ENCODE measurements at regions of chr3 and their contacts with region 1.

Region 1: GRCh38 chr3:125916376-125916978 is 52.5 kb upstream of the ROPN1B start:
- DNase-seq: peak; percentile 95
- H3K4me3 ChIP-seq: peak overlapping the region; percentile 86 to 89 (median 87)
- H3K27ac ChIP-seq: peak overlapping the region; percentile 96
- H3K4me1 ChIP-seq: no peaks in the 10 kb centered on the region
- H3K27me3 ChIP-seq: no peaks in the 10 kb centered on the region
- CTCF ChIP-seq: peak in 1 of 2 donors; percentile 45

Region 2: DNA sequence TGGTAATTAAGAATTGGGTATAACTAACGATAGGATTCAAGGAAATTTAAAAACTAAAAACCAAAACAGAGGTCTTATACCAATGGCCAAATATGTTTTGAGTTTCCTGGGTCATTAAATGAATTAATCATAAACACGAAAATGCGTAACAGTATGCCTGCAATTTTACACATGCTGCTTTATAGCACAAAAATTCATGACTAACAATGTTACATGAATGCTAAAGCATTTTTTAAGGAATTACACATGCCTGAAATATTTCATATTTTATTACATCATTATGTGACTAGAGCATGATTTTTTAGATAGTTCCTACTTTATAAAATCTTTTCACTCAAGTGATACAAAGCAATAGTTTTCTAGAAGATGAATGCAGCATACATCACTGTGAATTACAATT is 616.1 kb before region 1 on chr3:
- CTCF ChIA-PET with region 1: no interaction called
- dilution Hi-C with region 1: no loop called
- in situ Hi-C with region 1: no loop called
- intact Hi-C with region 1: no loop called
- DNase-seq: peak; percentile 56
- H3K4me3 ChIP-seq: no peak overlapping the region
- H3K27ac ChIP-seq: peak overlapping the region; percentile 54
- H3K4me1 ChIP-seq: peaks cover 8% of the 10 kb centered on the region
- H3K27me3 ChIP-seq: no peaks in the 10 kb centered on the region
- CTCF ChIP-seq: no peak

Region 3: DNA sequence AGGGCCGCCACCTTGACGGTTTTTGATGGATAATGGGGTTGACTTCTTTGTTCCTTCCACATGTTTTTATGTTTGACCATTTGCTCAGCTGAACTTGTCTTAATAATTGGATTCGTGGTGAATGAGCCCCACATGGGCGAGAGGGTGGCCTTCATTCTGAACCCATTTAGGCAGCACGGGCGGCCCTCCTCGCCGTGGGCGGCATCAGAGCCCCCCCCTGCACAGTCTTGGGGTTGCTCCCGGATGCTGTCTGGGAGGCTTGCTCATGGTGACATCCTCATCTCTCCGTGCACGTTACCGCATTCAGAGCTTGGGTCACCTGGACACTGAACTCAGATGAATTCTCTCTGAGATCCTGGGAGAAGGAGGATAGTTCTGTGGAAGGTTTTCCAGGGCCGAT is 148.8 kb before region 1 on chr3:
- CTCF ChIA-PET with region 1: no interaction called
- dilution Hi-C with region 1: no loop called
- in situ Hi-C with region 1: no loop called
- intact Hi-C with region 1: loop called (anchors 2 kb)
- DNase-seq: no peak
- H3K4me3 ChIP-seq: no peak overlapping the region
- H3K27ac ChIP-seq: no peak overlapping the region
- H3K4me1 ChIP-seq: no peaks in the 10 kb centered on the region
- H3K27me3 ChIP-seq: peaks cover 5% of the 10 kb centered on the region
- CTCF ChIP-seq: no peak

Region 4: DNA sequence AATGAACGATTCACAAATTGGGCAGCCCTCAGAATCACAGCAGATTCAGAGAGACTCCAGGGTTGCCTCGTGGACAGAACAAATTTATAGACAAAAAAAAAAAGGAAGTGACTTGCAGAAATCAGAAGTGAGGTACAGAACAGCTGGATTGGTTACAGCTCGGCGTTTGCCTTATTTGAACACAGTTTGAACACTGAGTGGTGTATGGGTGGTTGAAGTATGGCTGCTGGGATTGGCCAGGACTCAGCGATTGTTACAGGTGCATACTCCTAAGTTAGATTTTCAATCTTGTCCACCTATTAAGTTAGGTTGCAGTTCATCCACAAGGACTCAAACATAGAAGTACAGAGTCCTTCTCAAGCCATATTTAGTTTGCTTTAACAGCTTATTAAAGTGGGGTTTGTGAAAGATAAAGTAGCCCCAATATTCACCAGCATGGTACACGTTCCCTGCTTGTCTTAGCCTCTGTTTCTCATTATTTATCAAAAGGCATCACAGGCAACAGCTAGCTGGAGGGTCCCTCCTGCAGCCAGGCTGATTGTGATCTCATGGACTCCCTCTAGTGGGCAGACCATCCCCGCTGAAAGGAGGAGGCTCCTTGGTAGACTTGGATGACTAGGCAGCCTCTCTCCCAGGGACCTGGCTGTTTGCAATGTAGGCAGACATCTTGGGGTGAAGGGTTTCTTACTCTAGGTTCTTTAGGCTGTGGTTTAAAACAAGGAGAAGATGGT is 281.5 kb after region 1 on chr3:
- CTCF ChIA-PET with region 1: no interaction called
- dilution Hi-C with region 1: no loop called
- in situ Hi-C with region 1: no loop called
- intact Hi-C with region 1: loop called (anchors 5 kb)
- DNase-seq: peak; percentile 46
- H3K4me3 ChIP-seq: no peak overlapping the region
- H3K27ac ChIP-seq: no peak overlapping the region
- H3K4me1 ChIP-seq: no peaks in the 10 kb centered on the region
- H3K27me3 ChIP-seq: no peaks in the 10 kb centered on the region
- CTCF ChIP-seq: peak; percentile 87 to 92

Region 5: DNA sequence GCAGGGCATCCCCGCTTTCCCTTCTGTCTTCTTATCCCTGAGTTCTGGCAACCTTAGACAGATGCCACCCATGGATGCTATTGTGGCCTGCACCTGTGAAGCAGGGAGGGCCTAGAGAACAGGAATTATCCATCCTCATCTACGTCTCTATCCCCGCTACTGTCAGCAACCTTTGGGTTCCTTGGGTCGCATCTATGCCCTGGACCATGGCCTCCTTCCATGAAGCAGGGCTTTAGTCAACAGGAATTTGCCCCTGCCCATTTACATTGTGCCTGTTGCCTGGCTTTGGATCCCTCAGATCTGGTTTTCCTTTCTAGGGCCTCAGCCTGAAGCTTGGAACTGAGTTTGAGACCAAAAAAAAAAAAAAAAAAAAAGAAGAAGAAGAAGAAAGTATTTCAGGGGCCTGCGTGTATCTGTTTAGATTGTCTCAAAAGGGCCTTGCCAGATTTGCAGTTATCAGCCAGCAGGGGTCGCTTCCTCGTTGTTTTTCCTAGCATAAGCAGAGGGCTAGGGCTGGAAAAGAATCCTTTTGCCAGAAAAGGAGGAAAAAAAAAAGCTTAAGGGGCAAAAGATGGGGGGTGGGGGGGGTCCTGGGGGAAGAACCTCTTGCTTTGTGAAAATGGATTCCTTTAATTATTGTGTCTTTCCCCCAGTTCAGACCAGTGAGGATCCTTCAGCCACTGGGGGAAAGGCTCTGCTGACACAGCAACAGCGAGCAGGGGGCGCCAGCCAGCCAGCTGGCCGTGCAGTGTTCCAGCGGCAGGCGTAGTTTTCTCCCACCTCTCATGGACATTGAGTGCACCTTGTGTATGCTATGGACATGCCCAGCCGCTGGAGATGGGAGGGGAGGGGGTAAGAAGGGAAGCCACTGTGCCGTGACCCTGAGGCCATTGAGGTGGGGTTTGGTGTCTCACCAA is 329.6 kb after region 1 on chr3:
- CTCF ChIA-PET with region 1: no interaction called
- dilution Hi-C with region 1: no loop called
- in situ Hi-C with region 1: no loop called
- intact Hi-C with region 1: loop called (anchors 10 kb)
- DNase-seq: no peak
- H3K4me3 ChIP-seq: no peak overlapping the region
- H3K27ac ChIP-seq: no peak overlapping the region
- H3K4me1 ChIP-seq: no peaks in the 10 kb centered on the region
- H3K27me3 ChIP-seq: no peaks in the 10 kb centered on the region
- CTCF ChIP-seq: peak; percentile 56 to 73